WTC11 (cell line): ENCODE measurements at regions of chr11 and their contacts with region 1.

Region 1: DNA sequence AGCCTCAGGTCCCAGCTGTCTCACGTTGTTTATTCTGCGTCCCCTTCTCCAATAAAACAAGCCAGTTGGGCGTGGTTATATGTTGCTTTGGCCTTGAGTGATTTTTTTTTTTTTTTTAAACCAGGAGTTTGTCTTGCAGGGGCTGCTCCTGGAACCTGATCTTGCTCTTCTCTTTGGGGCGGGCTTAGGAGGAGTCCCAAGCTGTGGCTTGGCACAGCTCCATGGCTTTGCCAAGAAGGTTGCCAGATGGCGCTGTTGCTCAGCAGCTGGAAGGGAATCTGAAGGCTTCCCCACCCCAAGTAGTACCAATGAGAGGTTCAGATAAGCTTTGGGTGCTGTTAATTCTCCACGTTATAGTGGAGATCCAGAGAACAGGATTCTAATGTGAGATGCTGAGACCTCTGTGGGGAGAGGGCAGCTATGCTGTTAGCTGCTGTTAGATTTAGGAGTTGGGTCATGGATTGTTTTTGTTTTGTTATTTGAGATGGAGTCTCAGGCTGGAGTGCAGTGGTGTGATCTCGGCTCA is 2.0 kb upstream of the FERMT3 start:
- DNase-seq: peak; percentile 82
- ATAC-seq: peak; percentile 88
- H3K4me3 Mint-ChIP-seq: no peak overlapping the region
- H3K27ac Mint-ChIP-seq: peak overlapping the region; percentile 88
- H3K4me1 Mint-ChIP-seq: peaks cover 6% of the 10 kb centered on the region
- H3K27me3 Mint-ChIP-seq: no peaks in the 10 kb centered on the region
- CTCF ChIP-seq: peak; percentile 31; the same call in 1 of the 2 replicates

Region 2: GRCh38 chr11:64013141-64013896 is 191.2 kb before region 1 on chr11:
- CTCF ChIA-PET with region 1: no interaction called
- POLR2A ChIA-PET with region 1: no interaction called
- DNase-seq: no peak
- ATAC-seq: no peak
- H3K4me3 Mint-ChIP-seq: no peak overlapping the region
- H3K27ac Mint-ChIP-seq: no peak overlapping the region
- H3K4me1 Mint-ChIP-seq: no peaks in the 10 kb centered on the region
- H3K27me3 Mint-ChIP-seq: peaks cover 85% of the 10 kb centered on the region
- CTCF ChIP-seq: no peak

Region 3: DNA sequence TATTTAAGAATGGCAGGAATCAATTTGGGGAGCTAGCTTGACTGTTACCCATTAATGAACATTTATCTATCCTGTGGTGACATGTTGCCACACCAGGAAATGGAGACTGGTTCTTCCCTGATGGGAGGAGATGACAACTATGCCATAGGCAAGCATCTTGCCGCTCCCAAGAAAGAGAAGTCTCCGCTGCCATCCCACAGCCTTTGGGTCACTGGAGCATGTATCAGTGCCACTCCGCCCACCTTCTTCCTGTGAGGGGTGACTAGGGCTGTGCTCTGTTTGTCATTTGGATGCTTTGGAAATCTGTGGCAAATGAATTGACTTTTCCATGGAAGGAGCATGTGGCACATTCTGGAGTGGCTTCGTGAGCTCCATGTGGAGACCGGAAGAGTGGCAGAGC is 12.1 kb before region 1 on chr11:
- CTCF ChIA-PET with region 1: interaction called, 11 read pairs
- POLR2A ChIA-PET with region 1: interaction called, 3 read pairs
- DNase-seq: no peak
- ATAC-seq: no peak
- H3K4me3 Mint-ChIP-seq: no peak overlapping the region
- H3K27ac Mint-ChIP-seq: peak overlapping the region; percentile 41; the same call in 1 of the 2 replicates
- H3K4me1 Mint-ChIP-seq: peaks cover 9% of the 10 kb centered on the region
- H3K27me3 Mint-ChIP-seq: no peaks in the 10 kb centered on the region
- CTCF ChIP-seq: no peak

Region 4: GRCh38 chr11:64225612-64226506 is 21.3 kb after region 1 on chr11 and contains the starts of genes NUDT22 and TRPT1:
- CTCF ChIA-PET with region 1: interaction called, 27 read pairs
- POLR2A ChIA-PET with region 1: interaction called, 5 read pairs
- DNase-seq: peak; percentile 89
- ATAC-seq: peak; percentile 54
- H3K4me3 Mint-ChIP-seq: peak within 1 kb of the TSS; percentile 81
- H3K27ac Mint-ChIP-seq: peak within 1 kb of the TSS; percentile 84
- H3K4me1 Mint-ChIP-seq: peaks cover 24% of the 10 kb centered on the region
- H3K27me3 Mint-ChIP-seq: no peaks in the 10 kb centered on the region
- CTCF ChIP-seq: no peak
- total RNA-seq, gene NUDT22: 59.1 to 64.4 TPM (median 60.1 TPM) in 3 replicates
- total RNA-seq, gene TRPT1: 52.3 to 58.8 TPM (median 53.2 TPM) in 3 replicates

Region 5: DNA sequence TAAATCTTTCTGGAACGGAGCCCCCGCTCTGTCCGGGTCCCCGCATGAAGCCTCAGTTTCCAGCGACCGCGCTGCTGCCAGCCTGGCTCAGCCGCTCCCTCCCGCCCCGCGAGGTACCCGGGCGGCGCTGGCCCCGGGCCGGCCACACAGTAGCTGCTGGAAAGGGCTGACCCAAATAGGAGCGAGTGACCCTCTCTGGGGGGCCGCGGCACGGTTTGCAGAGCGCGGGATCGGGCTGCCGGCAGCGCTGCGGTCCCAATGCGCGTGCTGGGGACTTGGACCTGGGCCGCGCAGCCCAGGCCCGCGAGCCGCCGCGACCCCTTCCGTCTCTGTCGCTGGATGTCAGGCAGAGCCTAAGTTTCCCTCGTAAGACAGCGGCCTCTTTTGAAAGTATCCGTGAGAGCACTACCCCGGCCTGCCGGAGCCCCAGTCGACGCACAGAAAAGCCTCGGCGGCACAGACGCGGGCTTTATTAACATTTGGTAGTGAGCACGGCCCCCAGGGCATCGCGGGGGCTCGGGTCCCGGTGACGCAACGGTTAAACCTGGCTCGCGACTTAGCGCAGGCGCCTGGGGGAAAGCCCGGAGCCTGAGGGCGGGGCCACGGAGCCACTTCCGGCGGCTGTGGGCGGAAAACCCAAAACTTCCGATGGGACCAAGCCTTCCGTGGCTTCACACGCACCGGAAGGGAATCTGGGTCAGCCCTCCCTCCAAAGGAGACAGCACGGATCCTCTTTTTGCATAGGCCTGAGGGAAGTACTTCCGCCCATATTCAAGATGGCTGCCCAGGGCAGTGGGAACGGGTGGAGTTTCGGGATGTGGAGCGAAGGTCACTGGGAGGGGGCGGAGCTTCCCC is 65.1 kb after region 1 on chr11:
- CTCF ChIA-PET with region 1: interaction called, 14 read pairs
- POLR2A ChIA-PET with region 1: no interaction called
- DNase-seq: peak; percentile 98
- ATAC-seq: peak; percentile 83
- H3K4me3 Mint-ChIP-seq: peak overlapping the region; percentile 99
- H3K27ac Mint-ChIP-seq: peak overlapping the region; percentile 100
- H3K4me1 Mint-ChIP-seq: peaks cover 21% of the 10 kb centered on the region
- H3K27me3 Mint-ChIP-seq: no peaks in the 10 kb centered on the region
- CTCF ChIP-seq: no peak

Region 6: DNA sequence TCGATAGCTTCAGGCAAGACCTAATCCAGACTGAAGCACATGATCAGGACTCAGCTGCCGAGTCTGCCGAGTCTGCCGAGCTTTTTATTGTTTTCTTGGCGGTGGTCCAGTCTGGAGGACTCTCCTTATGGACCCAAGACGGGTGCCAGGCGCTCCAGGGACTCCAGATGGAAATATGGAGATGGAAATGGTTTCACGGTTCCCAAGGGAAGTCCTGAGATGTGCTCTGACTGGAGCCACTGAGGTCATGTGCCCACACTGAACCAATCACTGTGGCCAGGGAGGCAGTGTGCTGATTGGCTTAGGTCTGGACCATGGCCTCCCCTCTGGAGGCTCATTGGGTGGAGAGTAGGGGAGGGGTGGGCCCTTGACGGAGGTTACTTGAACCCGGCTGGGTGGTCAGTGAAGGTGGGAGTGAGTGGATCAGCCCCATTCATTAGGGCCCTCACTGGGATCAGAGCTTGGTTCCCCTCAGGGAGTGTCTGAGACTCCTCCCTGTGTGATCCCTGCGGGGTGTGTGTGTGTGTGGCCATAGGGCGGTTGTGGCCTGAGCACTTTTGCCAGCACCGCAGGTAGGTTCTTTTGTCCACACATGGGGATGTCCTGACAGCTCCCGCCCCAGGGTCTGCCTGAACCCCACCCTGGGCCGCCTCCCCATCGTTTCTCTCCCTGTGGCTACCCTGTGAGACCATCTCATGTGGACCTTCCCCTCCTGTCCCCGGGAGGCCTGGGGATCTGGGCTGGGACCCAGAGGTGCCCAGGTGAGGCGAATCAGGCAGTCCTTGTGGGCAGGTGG is 168.5 kb after region 1 on chr11:
- CTCF ChIA-PET with region 1: no interaction called
- POLR2A ChIA-PET with region 1: no interaction called
- DNase-seq: no peak
- ATAC-seq: peak; percentile 72
- H3K4me3 Mint-ChIP-seq: peak overlapping the region; percentile 10; the same call in 1 of the 2 replicates
- H3K27ac Mint-ChIP-seq: no peak overlapping the region
- H3K4me1 Mint-ChIP-seq: peaks cover 11% of the 10 kb centered on the region
- H3K27me3 Mint-ChIP-seq: no peaks in the 10 kb centered on the region
- CTCF ChIP-seq: no peak